ENCODE measurements at regions of chr2 and their contacts with region 1.

Region 1: DNA sequence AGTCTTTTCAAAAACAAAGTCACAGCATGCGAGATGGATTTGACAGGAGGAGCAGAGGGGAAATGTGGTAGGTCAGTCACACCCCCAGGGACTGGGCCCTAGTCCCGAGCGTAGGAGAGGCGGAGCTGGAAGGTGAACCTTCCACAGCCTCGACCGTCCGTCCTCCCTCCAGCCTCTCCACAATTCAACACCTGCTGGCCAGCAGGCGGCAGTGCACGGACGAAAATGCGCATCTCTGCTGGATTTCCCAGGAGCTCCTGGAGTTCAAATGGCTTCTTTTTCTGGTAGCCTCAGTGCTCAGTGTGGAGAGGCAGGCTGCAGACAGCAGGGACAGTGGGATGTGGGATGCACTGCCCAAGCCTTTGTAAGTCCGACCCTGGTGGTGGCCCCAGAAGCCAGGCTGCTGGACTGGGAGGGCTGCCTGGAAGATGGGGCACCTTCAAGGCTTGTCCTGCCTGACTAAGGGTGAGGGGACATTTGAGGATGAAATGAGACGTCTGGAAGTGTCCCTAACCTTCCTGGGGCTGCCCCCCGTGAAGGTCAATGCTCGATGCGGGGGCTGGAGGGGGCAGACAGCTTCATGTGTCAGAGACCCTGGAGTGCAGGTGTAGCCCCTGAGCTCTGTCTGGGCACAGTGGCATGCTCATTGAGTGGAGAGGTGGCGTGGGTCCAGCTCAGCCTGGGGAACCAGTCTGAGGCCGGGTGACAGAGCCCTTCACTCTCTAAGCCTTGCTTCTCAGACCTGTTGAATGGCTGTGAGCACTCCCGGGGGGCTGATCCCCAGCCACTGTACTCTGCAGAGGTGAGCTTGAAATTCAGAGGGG is 189.5 kb downstream of the TFCP2L1 start:
- DNase-seq: no peak
- H3K4me3 ChIP-seq: no peak overlapping the region
- H3K27me3 ChIP-seq: peaks cover 12% of the 10 kb centered on the region
- CTCF ChIP-seq: peak; percentile 78

Region 2: GRCh38 chr2:121076885-121077549 is 18.5 kb before region 1 on chr2:
- CTCF ChIA-PET with region 1: interaction called, 163 read pairs
- POLR2A ChIA-PET with region 1: no interaction called
- DNase-seq: no peak
- H3K4me3 ChIP-seq: no peak overlapping the region
- H3K27me3 ChIP-seq: peaks cover 3% of the 10 kb centered on the region; the same call in 1 of the 2 replicates
- CTCF ChIP-seq: peak; percentile 97

Region 3: GRCh38 chr2:121356058-121356640 is 260.7 kb after region 1 on chr2:
- CTCF ChIA-PET with region 1: interaction called, 60 read pairs
- POLR2A ChIA-PET with region 1: no interaction called
- DNase-seq: no peak
- H3K4me3 ChIP-seq: no peak overlapping the region
- H3K27me3 ChIP-seq: no peaks in the 10 kb centered on the region
- CTCF ChIP-seq: peak; percentile 85

Region 4: GRCh38 chr2:121519732-121520640 is 424.5 kb after region 1 on chr2:
- CTCF ChIA-PET with region 1: no interaction called
- POLR2A ChIA-PET with region 1: no interaction called
- DNase-seq: no peak
- H3K4me3 ChIP-seq: no peak overlapping the region
- H3K27me3 ChIP-seq: no peaks in the 10 kb centered on the region
- CTCF ChIP-seq: no peak

Region 5: GRCh38 chr2:121897335-121897970 is 802.0 kb after region 1 on chr2:
- CTCF ChIA-PET with region 1: no interaction called
- POLR2A ChIA-PET with region 1: interaction called, 15 read pairs
- DNase-seq: no peak
- H3K4me3 ChIP-seq: no peak overlapping the region
- H3K27me3 ChIP-seq: no peaks in the 10 kb centered on the region
- CTCF ChIP-seq: peak; percentile 63